ENCODE measurements at regions of chr14 and their contacts with region 1.

Region 1: DNA sequence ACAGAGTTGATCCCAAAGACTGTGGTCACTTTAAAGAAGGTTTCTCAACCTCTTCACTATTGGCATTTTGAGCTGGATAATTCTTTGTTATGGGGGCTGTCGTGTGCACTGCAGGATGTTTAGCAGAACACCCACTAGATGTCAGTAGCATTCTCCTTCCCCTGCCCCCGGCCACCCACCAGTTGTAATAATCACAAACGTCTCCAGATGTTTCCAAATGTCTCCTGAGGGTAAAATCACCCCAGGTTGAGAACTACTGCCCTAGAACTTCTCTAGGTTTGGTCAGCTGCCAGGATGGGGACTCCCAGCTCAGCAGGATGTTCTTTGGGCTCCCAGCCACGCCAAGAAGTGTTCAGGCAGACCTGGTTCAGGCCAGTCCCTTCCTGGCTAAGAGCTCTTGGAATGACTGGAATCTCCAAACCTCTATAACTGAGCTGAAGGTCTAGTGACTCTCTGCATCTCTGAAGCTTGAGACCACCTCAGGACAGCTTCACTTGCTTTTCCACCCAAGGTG is 12.5 kb upstream of the AJUBA start:
- DNase-seq: no peak
- H3K4me3 ChIP-seq: no peak overlapping the region
- H3K27ac ChIP-seq: no peak overlapping the region
- H3K4me1 ChIP-seq: no peaks in the 10 kb centered on the region
- H3K27me3 ChIP-seq: no peaks in the 10 kb centered on the region
- CTCF ChIP-seq: peak; percentile 31

Region 2: DNA sequence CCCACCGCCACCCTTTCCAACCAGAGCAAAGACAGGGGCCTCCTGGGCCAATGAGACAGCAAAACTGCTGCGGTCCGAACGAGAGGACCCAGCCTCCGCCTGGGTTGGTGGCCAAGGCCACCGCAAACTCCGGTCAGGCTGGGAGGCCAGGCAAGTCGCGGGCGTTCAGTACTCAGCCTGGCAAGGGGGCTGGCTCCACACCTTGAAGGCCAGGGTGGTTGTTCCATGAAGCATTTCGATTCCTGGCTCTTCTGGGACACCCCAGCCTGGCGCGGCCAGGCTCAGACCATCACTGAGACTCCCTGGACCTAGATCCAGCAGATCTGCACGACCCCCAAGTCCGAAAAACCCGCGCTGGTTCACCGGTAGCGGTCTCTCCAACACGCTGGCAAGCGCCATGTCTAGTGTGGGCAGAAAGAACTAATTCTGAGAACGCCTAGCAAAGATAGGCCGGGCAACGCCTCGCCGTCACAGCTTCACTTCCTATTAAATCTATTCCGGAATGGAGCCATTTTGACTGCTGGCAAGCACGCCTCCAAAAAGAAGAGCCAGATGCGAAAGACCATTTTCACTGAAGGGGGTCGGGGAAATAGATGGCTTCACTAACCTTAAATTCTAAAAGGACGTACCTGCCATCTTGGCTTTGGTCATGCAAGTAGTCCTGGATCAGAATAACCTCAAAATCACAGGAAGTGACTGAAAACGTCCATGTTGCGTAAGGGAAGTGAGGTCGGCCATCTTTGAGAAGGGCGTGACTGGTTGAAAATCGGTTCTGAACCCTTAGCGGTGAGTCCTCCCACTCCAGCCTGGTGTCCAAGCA is 39.9 kb after region 1 on chr14 and contains the start of gene PSMB5:
- intact Hi-C with region 1: loop called (anchors 5 kb)
- DNase-seq: peak; percentile 91
- H3K4me3 ChIP-seq: peak within 1 kb of the TSS; percentile 57
- H3K27ac ChIP-seq: peak within 1 kb of the TSS; percentile 88
- H3K4me1 ChIP-seq: peaks cover 9% of the 10 kb centered on the region
- H3K27me3 ChIP-seq: no peaks in the 10 kb centered on the region
- CTCF ChIP-seq: no peak
- total RNA-seq, gene PSMB5: 99.7 to 137 TPM

Measured in colonic mucosa (tissue), 4 donors.